Naive thymus-derived CD4-positive, alpha-beta T cell (primary cell): ENCODE measurements at regions of chr18 and their contacts with region 1.

Region 1: DNA sequence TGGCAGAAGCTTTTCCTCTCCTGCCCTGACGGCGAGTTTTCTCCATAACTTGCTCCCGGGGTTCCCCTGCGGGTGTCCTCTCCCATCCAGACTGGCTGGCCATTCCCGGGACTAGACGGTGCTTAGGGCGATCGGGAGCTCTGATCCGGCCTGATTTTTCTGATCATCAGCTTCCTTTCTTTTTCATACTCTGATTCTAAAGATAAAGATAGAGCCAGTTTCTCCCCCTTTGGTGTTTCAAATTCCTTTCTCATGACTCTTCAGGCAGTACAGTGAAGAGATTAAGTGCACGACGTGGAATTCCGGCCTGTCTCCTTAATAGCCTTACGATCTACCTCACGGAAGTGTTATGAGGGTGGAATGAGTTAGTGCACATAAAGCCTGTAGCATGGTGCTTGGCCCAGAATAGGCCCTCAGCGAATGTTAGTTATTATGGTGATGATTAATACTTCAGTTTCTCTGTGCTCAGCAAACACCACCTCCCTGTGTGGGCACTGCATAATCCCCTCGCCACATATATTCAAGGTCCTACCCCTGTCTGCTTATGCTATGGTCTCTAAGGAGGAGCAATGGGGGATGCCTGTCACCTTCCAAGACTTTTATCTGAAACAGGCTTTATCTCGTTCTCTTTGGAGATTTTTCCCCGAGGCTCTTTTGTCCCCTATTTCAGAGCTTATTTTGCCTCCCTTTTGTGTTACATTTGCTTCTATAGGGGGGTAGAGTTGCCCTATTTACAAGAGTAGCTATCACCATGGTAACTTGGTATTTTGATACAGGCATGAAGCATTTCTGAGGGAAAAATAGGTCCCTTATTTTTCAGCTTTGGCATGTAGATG is 254.8 kb downstream of the CDH2 start:
- DNase-seq: no peak
- ATAC-seq: no peak
- H3K4me3 ChIP-seq: no peak overlapping the region
- H3K4me3 Mint-ChIP-seq: no peak overlapping the region
- H3K27ac ChIP-seq: no peak overlapping the region
- H3K27ac Mint-ChIP-seq: no peak overlapping the region
- H3K4me1 ChIP-seq: no peaks in the 10 kb centered on the region
- H3K4me1 Mint-ChIP-seq: no peaks in the 10 kb centered on the region
- H3K27me3 ChIP-seq: no peaks in the 10 kb centered on the region
- H3K27me3 Mint-ChIP-seq: no peaks in the 10 kb centered on the region

Region 2: GRCh38 chr18:27778441-27778840 is 143.7 kb before region 1 on chr18:
- CTCF ChIA-PET with region 1: no interaction called
- POLR2A ChIA-PET with region 1: no interaction called
- intact Hi-C with region 1: no loop called
- DNase-seq: no peak
- ATAC-seq: no peak
- H3K4me3 ChIP-seq: no peak overlapping the region
- H3K4me3 Mint-ChIP-seq: no peak overlapping the region
- H3K27ac ChIP-seq: no peak overlapping the region
- H3K27ac Mint-ChIP-seq: no peak overlapping the region
- H3K4me1 ChIP-seq: no peaks in the 10 kb centered on the region
- H3K4me1 Mint-ChIP-seq: no peaks in the 10 kb centered on the region
- H3K27me3 ChIP-seq: no peaks in the 10 kb centered on the region
- H3K27me3 Mint-ChIP-seq: no peaks in the 10 kb centered on the region

Region 3: DNA sequence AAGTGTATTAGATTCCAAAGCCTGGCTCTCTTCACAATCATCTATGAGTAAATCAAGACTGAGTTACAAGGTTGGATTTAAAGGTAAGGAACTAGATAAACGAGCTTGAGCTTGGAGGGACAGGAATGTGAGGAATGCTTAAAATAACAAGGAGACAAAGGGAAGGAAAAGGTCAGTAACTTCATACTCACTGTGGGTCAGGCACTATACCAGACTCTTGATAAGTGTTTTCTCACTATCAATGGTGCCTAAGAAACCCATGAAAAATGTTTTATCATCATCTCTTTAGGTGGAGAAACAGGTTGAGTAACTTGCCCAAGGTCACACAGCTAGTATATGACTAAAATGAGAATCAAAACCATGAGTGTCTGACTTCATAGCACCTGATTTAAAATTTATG is 42.7 kb after region 1 on chr18:
- CTCF ChIA-PET with region 1: no interaction called
- POLR2A ChIA-PET with region 1: no interaction called
- intact Hi-C with region 1: loop called in 1 of 2 experiments (anchors 5 kb)
- DNase-seq: no peak
- ATAC-seq: no peak
- H3K4me3 ChIP-seq: no peak overlapping the region
- H3K4me3 Mint-ChIP-seq: no peak overlapping the region
- H3K27ac ChIP-seq: no peak overlapping the region
- H3K27ac Mint-ChIP-seq: no peak overlapping the region
- H3K4me1 ChIP-seq: no peaks in the 10 kb centered on the region
- H3K4me1 Mint-ChIP-seq: no peaks in the 10 kb centered on the region
- H3K27me3 ChIP-seq: no peaks in the 10 kb centered on the region
- H3K27me3 Mint-ChIP-seq: no peaks in the 10 kb centered on the region